MCF 10A (cell line): ENCODE measurements at regions of chr4 and their contacts with region 1.

Region 1: DNA sequence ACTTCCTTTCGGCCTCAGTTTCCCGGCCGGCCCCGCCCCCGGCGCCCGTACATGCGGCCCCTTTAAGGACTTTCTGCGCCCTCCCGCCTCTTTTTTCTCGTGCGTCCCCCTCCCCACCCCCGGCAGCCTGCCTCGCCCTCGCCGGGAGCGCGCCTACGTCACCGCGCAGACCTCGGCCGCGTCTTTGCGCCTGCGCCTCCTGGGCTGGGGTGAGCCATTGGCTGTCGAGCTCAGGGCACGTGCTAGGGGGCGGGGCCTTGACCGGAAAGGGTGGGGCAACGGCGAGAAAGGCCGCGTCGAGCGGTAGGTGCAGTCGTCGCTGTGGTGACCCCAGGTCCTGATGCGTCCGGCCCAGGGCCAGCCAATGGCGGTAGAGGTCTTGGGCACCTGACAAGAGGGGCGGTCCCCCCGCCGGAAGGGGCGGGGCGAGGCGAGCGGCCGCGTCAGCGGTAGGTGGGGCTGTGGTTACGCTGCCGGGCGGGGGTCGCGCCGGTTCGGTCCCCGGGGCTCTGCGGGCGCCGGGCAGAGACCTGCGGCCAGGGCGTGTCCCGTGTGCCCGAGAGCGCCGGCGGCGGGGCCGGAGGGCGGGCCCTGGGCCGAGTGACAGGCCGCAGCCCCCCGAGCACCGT is at the start of gene UVSSA:
- DNase-seq: peak; percentile 99
- H3K4me3 Mint-ChIP-seq: peak within 1 kb of the TSS; percentile 89
- H3K27ac Mint-ChIP-seq: peak within 1 kb of the TSS; percentile 83
- H3K4me1 Mint-ChIP-seq: peaks cover 32% of the 10 kb centered on the region
- H3K27me3 Mint-ChIP-seq: no peaks in the 10 kb centered on the region
- CTCF ChIP-seq: no peak
- total RNA-seq, gene UVSSA: 41.1 and 43.6 TPM in 2 replicates

Region 2: DNA sequence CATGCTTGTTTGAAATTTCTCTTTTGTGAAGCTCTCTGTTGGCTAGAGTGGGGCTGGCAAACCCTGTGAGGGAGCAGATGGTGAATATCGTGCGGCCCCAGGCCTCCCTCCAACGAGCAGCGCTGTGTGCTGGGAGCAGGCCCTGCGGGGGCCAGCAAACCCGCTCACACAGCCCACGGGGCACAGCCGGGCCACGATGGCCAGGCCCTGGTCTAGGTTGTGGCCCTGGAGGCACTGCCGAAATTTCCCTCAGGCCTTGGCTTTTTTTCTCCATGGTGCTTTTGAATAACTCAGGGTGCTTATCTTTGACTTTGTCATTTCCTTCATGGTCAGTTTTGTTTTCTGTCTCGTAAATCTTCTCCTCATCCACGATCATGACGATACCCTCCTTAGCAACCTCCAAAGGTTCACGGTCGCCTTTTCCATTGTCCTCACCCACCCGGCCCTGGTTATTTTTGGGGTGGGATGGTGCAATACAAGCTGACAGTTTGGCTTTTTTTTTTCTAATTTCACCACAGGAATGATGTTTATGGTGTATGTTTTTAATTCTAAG is 620.6 kb before region 1 on chr4:
- CTCF ChIA-PET with region 1: no interaction called
- POLR2A ChIA-PET with region 1: no interaction called
- intact Hi-C with region 1: no loop called
- DNase-seq: no peak
- H3K4me3 Mint-ChIP-seq: no peak overlapping the region
- H3K27ac Mint-ChIP-seq: no peak overlapping the region
- H3K4me1 Mint-ChIP-seq: peaks cover 18% of the 10 kb centered on the region
- H3K27me3 Mint-ChIP-seq: no peaks in the 10 kb centered on the region
- CTCF ChIP-seq: no peak

Region 3: GRCh38 chr4:815464-816146 is 531.3 kb before region 1 on chr4:
- CTCF ChIA-PET with region 1: no interaction called
- POLR2A ChIA-PET with region 1: no interaction called
- intact Hi-C with region 1: no loop called
- DNase-seq: no peak
- H3K4me3 Mint-ChIP-seq: no peak overlapping the region
- H3K27ac Mint-ChIP-seq: no peak overlapping the region
- H3K4me1 Mint-ChIP-seq: no peaks in the 10 kb centered on the region
- H3K27me3 Mint-ChIP-seq: peaks cover 34% of the 10 kb centered on the region
- CTCF ChIP-seq: no peak

Region 4: DNA sequence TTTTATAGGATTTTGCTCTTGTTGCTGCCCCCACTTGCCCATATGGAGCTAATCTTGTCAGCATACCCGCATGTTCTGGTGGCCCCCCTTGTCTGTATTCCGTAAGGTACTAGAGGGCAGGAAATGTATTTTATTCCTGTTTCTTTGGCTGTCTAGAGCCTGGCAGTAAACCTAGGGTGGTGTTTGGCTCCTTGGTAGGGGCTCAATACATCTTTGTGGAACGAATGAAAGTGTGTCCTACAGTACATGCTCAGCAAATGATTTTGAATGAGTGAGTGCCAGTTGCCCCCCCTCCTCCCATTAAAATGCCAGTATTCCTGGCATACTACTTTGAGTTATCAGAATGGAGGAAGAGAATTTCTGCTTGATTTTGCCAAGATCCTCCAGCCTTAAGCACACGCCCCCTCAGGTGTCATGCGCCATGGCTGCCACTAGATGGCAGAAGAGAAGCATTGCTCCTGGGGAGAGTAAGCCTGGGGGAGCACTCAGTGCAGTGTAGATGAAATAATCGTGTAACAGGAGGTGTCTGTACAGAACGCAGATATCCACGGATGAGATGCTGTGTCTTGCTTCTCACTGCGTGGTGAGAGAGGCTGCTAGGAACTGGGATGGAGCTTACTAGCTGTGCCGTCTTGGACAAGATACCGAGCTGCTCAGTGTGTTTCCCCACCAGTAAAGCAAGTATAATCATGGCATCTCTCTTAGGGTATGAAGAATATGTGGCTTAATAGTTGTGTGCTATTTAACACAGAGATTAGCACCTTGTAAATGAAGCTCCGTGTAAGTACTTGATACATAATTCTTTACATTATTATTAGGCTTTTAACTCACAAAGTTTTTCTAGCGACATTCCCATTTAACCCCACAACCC is 216.3 kb before region 1 on chr4:
- CTCF ChIA-PET with region 1: interaction called, 31 read pairs
- POLR2A ChIA-PET with region 1: interaction called, 5 read pairs
- intact Hi-C with region 1: loop called (anchors 1 kb)
- DNase-seq: peak; percentile 79
- H3K4me3 Mint-ChIP-seq: no peak overlapping the region
- H3K27ac Mint-ChIP-seq: no peak overlapping the region
- H3K4me1 Mint-ChIP-seq: no peaks in the 10 kb centered on the region
- H3K27me3 Mint-ChIP-seq: peaks cover 47% of the 10 kb centered on the region
- CTCF ChIP-seq: peak; percentile 99

Region 5: GRCh38 chr4:1192091-1192492 is 154.8 kb before region 1 on chr4:
- CTCF ChIA-PET with region 1: no interaction called
- POLR2A ChIA-PET with region 1: interaction called, 3 read pairs
- intact Hi-C with region 1: loop called (anchors 1 kb)
- DNase-seq: peak; percentile 94
- H3K4me3 Mint-ChIP-seq: no peak overlapping the region
- H3K27ac Mint-ChIP-seq: peak overlapping the region; percentile 51
- H3K4me1 Mint-ChIP-seq: peaks cover 18% of the 10 kb centered on the region
- H3K27me3 Mint-ChIP-seq: peaks cover 6% of the 10 kb centered on the region
- CTCF ChIP-seq: no peak

Region 6: DNA sequence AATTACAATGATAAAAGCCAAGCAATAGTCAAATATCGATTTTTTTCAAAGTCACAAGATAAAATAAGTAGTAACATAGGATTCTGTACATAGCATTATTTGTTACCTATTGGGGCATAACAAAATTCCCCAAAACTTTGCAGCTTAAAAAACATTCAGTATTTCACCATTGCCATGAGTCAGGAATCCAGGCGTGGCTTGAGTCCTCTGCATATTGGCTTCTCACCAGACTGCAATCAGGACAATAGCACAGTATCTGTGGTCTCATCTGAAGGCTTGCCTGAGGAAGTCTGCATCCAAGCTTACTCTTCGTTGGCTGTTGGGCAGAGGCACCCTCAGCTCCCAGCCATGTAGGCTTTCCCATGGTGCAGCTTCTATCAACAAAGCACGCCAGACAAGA is 91.7 kb before region 1 on chr4:
- CTCF ChIA-PET with region 1: interaction called, 4 read pairs
- POLR2A ChIA-PET with region 1: interaction called, 112 read pairs
- intact Hi-C with region 1: no loop called
- DNase-seq: peak; percentile 38
- H3K4me3 Mint-ChIP-seq: no peak overlapping the region
- H3K27ac Mint-ChIP-seq: no peak overlapping the region
- H3K4me1 Mint-ChIP-seq: peaks cover 8% of the 10 kb centered on the region
- H3K27me3 Mint-ChIP-seq: no peaks in the 10 kb centered on the region
- CTCF ChIP-seq: no peak

Region 7: DNA sequence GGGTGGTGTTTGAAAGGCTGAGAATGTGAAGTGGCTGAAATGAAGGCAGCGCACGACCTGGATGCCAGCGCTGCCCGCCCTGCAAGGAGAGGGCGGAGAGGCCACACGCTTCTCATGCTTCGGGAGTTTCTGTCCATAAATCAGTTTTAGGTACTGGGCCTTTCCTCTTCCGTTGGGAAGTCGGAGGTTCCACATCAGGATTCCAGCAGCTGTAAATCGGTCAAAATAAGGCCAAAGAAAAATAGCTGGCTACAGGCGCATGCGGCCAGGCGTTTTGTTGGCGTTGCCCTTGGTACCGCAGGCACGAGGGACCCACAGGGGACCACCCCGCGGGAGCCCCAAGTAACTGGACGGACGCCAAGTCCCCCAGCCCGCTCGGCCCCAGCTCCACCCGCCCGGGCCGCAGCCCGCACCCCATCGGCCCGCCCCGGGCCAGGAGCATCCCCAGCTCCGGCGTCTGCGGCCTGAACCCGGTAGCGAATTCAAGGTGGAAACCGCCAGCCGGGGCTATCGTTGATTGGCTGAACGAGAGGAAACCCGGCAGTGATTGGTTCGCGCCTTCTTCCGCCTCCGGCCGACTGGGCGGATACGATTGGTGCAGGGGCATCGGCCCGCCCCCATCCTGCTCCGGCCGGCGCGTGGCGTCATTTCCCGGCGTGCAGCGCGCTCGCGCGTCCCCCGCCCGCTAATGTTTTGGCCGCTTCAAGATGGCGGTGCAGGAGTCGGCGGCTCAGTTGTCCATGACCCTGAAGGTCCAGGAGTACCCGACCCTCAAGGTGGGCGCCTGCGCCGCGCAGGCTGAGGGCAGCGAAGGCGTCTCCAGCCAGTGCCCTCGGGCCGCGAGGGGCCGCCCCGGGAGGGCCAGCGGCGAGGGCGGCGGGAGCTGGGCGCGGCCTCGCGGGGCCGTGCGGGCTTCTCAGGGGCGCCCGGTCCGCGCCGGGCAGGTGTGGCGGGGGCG is 57.4 kb before region 1 on chr4 and contains the start of gene MAEA:
- CTCF ChIA-PET with region 1: interaction called, 10 read pairs
- POLR2A ChIA-PET with region 1: interaction called, 79 read pairs
- intact Hi-C with region 1: no loop called
- DNase-seq: peak; percentile 96
- H3K4me3 Mint-ChIP-seq: peak within 1 kb of the TSS; percentile 95
- H3K27ac Mint-ChIP-seq: peak within 1 kb of the TSS; percentile 95
- H3K4me1 Mint-ChIP-seq: peaks cover 22% of the 10 kb centered on the region
- H3K27me3 Mint-ChIP-seq: no peaks in the 10 kb centered on the region
- CTCF ChIP-seq: no peak
- total RNA-seq, gene MAEA: 78.8 and 89.6 TPM in 2 replicates

Region 8: DNA sequence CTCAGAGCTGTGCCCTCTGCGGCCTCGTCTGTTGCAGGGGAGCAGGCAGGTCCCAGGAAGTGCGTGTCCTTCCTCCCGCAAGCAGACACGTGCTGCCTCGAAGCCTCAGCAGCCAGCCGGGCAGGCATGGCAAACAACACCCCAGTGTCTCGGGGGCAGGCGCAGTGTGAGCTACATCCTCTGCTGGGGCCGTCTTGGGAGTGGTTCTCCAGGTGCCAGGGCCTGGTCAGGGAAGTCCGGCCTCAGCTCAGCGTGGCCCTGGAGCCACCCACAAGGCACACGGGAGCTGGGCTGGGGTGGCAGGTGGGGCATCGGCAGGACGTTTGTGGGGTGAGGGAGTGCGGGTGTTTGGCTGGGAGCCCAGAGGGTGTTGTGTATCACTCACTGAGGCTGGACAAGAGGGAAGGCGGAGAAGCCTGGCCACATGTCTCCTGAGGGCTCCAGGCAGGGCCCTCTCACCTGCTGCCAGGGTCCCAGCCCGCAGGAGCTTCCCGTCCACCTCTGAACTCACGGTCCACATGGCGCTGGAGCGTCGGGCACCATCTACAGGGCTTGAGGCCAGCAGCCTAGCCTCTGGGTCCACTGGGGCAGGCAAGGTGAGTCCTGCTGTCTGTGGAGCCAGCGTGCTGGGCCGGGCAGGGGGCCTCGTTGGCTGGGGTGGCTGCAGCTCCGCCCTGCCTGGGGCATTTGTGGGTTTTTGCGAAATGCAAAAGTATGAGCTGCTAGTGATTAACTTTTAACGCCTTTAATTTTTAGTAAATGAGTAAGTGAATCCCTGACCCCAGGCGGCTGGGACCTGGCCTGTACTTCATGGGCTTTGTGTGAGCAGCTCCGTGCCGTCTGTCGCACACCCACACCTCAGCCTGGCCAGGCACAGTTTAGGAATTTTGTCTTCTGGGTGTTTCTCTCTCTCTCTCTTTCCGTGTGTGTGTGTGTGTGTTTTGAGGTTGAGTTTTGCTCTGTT is 17.2 kb before region 1 on chr4:
- CTCF ChIA-PET with region 1: interaction called, 7 read pairs
- POLR2A ChIA-PET with region 1: interaction called, 44 read pairs
- intact Hi-C with region 1: no loop called
- DNase-seq: peak; percentile 85
- H3K4me3 Mint-ChIP-seq: peak overlapping the region; percentile 57
- H3K27ac Mint-ChIP-seq: peak overlapping the region; percentile 95
- H3K4me1 Mint-ChIP-seq: peaks cover 22% of the 10 kb centered on the region
- H3K27me3 Mint-ChIP-seq: no peaks in the 10 kb centered on the region
- CTCF ChIP-seq: no peak

Region 9: GRCh38 chr4:1417522-1418390 is 70.9 kb after region 1 on chr4:
- CTCF ChIA-PET with region 1: no interaction called
- POLR2A ChIA-PET with region 1: no interaction called
- intact Hi-C with region 1: no loop called
- DNase-seq: no peak
- H3K4me3 Mint-ChIP-seq: no peak overlapping the region
- H3K27ac Mint-ChIP-seq: no peak overlapping the region
- H3K4me1 Mint-ChIP-seq: no peaks in the 10 kb centered on the region
- H3K27me3 Mint-ChIP-seq: peaks cover 25% of the 10 kb centered on the region
- CTCF ChIP-seq: no peak